Calu3 (cell line): ENCODE measurements at regions of chr16 and their contacts with region 1.

Region 1: GRCh38 chr16:69796351-69797118 is 34.4 kb downstream of the WWP2 start:
- DNase-seq: peak; percentile 55
- H3K4me3 Mint-ChIP-seq: no peak overlapping the region
- H3K27ac Mint-ChIP-seq: no peak overlapping the region
- H3K4me1 Mint-ChIP-seq: no peaks in the 10 kb centered on the region
- H3K27me3 Mint-ChIP-seq: no peaks in the 10 kb centered on the region
- CTCF ChIP-seq: peak; percentile 84

Region 2: DNA sequence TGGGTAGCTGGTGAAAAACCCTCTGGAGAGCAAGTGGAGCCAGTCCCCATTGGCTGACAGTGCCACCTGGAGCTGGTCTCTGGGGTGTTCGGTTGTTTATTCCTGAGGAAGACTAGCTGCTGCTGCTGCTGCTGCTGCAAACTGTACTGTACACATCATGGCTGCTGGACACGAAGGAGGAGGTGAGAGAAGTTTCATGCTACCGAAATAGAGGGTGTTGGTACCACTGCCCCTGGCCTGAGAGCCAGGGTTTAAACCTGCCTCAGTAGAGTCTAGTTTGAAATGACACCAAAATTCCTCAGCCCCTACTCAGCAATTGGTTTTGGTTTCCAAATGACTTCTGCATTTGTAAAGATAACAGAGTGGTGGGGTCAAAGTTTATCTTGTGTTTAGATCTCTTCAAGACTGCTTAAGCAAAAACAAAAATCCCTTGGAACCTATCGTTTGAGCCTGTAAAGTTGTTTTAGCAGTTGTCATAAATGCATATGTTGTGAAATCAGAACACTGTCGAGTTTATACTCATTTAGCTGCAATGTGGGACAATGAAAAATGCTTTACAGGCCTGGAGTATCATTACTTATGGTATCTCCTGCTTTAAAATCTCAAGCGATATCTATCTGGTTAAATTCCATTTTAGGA is 331.3 kb before region 1 on chr16:
- CTCF ChIA-PET with region 1: no interaction called
- intact Hi-C with region 1: no loop called
- DNase-seq: peak; percentile 12
- H3K4me3 Mint-ChIP-seq: no peak overlapping the region
- H3K27ac Mint-ChIP-seq: no peak overlapping the region
- H3K4me1 Mint-ChIP-seq: peaks cover 19% of the 10 kb centered on the region
- H3K27me3 Mint-ChIP-seq: no peaks in the 10 kb centered on the region
- CTCF ChIP-seq: no peak

Region 3: GRCh38 chr16:69589434-69590269 is 206.9 kb before region 1 on chr16:
- CTCF ChIA-PET with region 1: no interaction called
- intact Hi-C with region 1: no loop called
- DNase-seq: no peak
- H3K4me3 Mint-ChIP-seq: no peak overlapping the region
- H3K27ac Mint-ChIP-seq: no peak overlapping the region
- H3K4me1 Mint-ChIP-seq: peaks cover 16% of the 10 kb centered on the region
- H3K27me3 Mint-ChIP-seq: no peaks in the 10 kb centered on the region
- CTCF ChIP-seq: no peak

Region 4: DNA sequence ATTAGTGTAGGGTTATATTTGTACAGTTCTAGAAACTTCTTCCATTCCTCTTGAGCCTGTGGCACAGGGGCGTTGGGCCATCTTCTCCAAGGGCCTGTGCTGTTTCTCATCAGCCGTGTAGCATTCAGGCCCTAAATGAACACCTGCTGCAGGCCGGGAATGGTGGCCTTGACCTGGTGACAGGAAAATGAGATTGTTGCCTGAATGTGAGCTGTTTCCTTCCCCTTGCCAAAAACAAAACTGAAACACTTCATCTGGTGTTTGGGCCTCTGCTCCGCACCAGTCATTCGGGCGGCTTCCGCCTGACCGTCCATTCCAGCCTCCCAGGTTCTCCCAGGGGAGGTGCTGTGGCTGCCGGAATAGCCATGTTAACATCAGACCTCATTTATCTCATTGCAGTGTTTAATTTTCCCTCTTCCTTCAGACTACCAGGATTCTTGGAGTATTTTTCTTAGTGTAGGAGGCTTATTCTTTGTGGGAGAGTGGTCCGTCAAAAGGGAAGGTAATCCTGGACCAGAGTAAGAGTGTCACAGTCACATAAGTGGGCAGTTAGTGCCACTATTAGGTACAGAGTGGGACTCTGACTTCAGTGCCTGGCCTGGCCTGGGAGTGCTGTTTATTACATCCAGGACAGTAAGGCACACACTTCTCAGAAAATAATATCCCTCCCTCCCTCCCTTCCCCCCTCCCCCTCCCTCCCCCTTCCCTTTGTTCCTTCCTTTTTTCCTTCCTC is 27.5 kb after region 1 on chr16:
- CTCF ChIA-PET with region 1: no interaction called
- intact Hi-C with region 1: no loop called
- DNase-seq: no peak
- H3K4me3 Mint-ChIP-seq: no peak overlapping the region
- H3K27ac Mint-ChIP-seq: no peak overlapping the region
- H3K4me1 Mint-ChIP-seq: no peaks in the 10 kb centered on the region
- H3K27me3 Mint-ChIP-seq: no peaks in the 10 kb centered on the region
- CTCF ChIP-seq: no peak

Region 5: GRCh38 chr16:69848637-69849545 is 52.4 kb after region 1 on chr16:
- CTCF ChIA-PET with region 1: no interaction called
- intact Hi-C with region 1: no loop called
- DNase-seq: no peak
- H3K4me3 Mint-ChIP-seq: no peak overlapping the region
- H3K27ac Mint-ChIP-seq: no peak overlapping the region
- H3K4me1 Mint-ChIP-seq: no peaks in the 10 kb centered on the region
- H3K27me3 Mint-ChIP-seq: no peaks in the 10 kb centered on the region
- CTCF ChIP-seq: no peak

Region 6: DNA sequence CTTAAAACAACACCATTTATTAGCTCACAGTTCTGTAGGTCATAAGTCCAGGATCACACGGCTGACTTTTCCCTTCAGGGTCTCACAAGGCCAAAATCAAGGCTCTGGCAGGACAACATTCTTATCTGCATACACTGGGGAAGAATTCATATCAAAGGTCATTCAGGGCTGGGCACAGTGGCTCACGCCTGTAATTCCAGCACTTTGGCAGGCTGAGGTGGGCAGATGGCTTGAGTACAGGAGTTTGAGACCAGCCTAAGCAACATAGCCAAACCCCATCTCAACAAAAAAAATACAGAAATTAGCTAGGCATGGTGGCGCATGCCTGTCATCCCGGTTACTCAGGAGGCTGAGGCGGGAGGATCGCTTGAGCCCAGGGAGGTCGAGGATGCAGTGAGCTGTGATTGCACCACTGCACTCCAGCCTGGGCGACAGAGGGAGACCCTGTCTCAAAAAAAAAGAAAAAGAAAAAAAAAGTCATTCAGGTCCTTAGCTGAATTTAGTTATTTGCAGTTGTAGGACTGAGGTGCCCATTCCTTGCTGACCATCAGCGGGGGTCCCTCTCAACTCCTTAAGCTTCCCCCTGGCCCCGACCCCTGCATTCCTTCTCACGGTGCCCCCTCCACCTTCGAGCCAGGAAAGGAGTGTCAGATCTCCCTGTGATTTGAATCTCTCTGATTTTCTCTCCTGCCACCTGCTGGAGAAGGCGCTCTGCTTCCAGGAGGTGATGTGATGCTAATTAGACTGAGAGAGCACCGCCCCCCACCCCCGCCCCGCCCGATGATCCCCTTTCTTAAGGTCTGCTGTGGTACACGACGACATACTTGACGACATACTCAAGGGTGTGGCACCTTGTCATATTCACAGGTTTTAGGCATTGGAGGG is 62.8 kb after region 1 on chr16:
- CTCF ChIA-PET with region 1: no interaction called
- intact Hi-C with region 1: loop called (anchors 1 kb)
- DNase-seq: peak; percentile 63
- H3K4me3 Mint-ChIP-seq: peak overlapping the region; percentile 31
- H3K27ac Mint-ChIP-seq: peak overlapping the region; percentile 18
- H3K4me1 Mint-ChIP-seq: peaks cover 23% of the 10 kb centered on the region
- H3K27me3 Mint-ChIP-seq: no peaks in the 10 kb centered on the region
- CTCF ChIP-seq: no peak

Region 7: DNA sequence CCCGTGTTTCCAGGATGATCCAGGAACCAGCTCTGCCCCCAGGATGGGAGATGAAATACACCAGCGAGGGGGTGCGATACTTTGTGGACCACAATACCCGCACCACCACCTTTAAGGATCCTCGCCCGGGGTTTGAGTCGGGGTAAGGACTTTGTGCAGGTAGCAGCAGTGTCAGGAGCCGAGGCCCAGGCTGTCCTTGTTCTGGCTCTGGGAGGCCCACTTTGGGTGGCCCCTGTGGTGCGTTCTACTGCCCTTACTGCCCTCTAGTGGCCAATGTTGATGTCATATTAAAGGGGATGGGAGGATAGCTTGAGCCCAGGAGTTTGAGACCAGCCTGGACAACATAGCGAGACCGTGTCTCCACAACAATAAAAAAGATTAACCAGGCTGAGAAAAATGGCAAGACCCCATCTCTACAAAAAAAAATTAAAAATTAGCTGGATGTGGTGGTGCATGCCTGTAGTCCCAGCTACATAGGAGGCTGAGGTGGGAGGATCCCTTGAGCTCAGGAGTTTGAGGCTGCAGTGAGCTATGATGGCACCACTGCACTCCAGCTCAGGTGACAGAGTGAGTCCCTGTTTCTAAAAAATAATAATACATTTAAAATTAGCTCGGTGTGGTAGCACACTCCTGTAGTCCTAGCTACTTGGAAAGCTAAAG is 133.7 kb after region 1 on chr16:
- CTCF ChIA-PET with region 1: interaction called, 7 read pairs
- intact Hi-C with region 1: loop called (anchors 1 kb)
- DNase-seq: peak; percentile 68
- H3K4me3 Mint-ChIP-seq: no peak overlapping the region
- H3K27ac Mint-ChIP-seq: no peak overlapping the region
- H3K4me1 Mint-ChIP-seq: no peaks in the 10 kb centered on the region
- H3K27me3 Mint-ChIP-seq: no peaks in the 10 kb centered on the region
- CTCF ChIP-seq: peak; percentile 83